Mammary epithelial cell (primary cell): ENCODE measurements at regions of chr11 and their contacts with region 1.

Region 1: DNA sequence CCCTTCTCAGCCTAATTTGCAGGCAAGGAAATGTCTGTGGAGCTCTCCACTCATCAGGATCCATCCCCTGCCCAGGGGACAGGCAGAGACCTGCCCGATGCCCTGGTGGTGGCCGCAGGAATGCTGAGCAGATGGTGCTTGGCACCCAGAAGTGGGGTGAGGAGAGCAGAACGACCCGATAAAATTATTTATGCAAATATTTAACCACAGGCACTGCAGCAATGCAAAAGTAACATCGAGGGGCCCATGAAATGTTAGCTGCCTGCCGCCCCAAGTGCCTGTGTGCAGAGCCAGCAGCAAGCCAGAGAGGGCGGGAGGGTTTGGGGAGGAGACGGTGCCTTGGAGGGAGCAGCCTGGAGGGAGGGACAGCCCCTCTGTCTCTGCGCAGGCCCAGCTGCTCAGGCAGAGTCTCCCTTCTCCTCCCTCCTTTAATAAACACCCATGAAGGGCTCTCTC is 205.5 kb downstream of the CTTN start:
- DNase-seq: peak; percentile 75
- H3K4me3 ChIP-seq: peak overlapping the region in 1 of 3 experiments; percentile 18
- H3K27ac ChIP-seq: no peak overlapping the region
- H3K4me1 ChIP-seq: peaks cover 27% of the 10 kb centered on the region
- H3K27me3 ChIP-seq: no peaks in the 10 kb centered on the region
- CTCF ChIP-seq: peak in 1 of 2 donors; percentile 13

Region 2: GRCh38 chr11:70544809-70545537 is 58.8 kb before region 1 on chr11:
- CTCF ChIA-PET with region 1: no interaction called
- dilution Hi-C with region 1: no loop called
- in situ Hi-C with region 1: no loop called
- intact Hi-C with region 1: no loop called
- DNase-seq: no peak
- H3K4me3 ChIP-seq: no peak overlapping the region
- H3K27ac ChIP-seq: no peak overlapping the region
- H3K4me1 ChIP-seq: no peaks in the 10 kb centered on the region
- H3K27me3 ChIP-seq: no peaks in the 10 kb centered on the region
- CTCF ChIP-seq: no peak

Region 3: DNA sequence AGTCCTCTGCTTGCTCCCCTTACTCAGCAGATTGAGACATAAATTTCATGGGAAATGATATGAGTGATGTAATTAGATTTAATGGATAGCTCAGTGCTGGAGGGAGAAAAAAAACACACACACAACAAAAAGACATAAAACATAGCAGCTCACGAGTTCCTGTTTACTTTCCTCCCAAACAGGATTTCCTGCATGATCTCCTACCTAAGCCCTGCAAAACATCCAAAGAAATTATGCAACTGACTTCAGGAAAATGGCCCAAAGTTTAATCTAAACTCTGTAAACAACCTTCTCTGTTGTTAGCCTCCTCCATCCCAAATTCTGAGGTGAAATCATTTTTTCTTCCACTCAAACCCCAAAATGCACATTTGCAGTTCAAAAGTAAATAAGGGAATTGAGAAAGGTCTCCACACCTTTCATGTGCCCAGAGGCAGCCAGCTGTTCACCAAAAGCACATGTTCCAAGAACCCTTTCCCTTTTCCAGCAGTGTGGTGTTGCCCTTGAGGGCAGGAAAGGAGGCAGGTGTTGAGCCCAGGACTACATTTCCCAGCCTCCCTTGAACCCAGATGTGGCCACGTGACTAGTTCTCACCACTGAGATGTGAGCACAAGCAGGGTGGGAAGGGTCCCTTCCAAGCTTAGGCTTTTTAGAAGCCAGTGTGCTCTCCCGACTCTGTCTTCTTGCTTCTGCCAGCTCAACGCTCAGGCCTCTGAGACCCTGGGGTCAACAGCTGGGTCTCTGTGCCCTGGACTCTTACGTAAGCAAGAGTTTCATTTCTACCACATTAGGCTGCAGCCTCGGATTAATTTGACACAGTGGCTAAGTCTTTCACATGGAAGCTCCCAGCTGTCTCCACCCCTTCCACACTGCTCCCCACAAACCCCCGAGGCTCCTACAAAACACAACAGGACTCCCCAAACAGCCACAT is 95.8 kb after region 1 on chr11:
- CTCF ChIA-PET with region 1: no interaction called
- dilution Hi-C with region 1: loop called (anchors 5 kb)
- in situ Hi-C with region 1: no loop called
- intact Hi-C with region 1: no loop called
- DNase-seq: no peak
- H3K4me3 ChIP-seq: no peak overlapping the region
- H3K27ac ChIP-seq: no peak overlapping the region
- H3K4me1 ChIP-seq: no peaks in the 10 kb centered on the region
- H3K27me3 ChIP-seq: no peaks in the 10 kb centered on the region
- CTCF ChIP-seq: no peak

Region 4: DNA sequence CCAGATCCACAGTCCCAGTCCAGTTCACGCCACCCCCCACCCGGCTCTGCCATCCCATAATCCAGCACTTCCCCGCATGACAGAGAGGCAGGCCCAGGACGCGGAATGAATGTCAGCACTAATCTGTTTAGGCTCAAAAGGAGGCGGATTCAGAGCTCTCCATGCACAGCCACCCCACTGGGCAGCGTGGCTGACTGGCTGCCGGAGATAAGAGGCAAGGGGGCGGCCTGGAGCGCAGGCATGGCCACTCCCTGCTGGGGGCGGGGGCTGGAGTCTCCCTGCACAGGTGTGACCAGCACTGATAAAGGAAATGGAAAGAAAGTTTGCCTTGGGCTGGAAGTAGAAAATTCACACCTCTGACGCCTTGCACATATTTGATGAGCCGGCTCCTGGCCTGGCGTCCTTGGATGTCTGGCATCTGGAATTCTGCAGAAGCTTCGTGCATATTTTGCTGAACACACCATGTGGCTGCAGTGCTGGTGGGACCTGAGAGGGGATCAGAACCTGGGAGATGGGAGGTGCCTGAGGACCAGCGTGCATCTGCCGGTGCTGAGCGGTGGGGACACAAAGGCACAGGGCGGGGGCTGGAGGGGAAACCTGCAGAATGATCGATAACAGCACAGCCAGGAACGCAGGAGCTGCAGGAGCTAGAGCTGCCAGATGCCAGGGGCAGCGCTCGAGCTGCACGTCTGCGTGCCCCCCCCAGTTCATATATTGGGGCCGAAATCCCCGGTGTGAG is 138.9 kb after region 1 on chr11:
- CTCF ChIA-PET with region 1: no interaction called
- dilution Hi-C with region 1: loop called (anchors 5 kb)
- in situ Hi-C with region 1: no loop called
- intact Hi-C with region 1: no loop called
- DNase-seq: no peak
- H3K4me3 ChIP-seq: no peak overlapping the region
- H3K27ac ChIP-seq: no peak overlapping the region
- H3K4me1 ChIP-seq: no peaks in the 10 kb centered on the region
- H3K27me3 ChIP-seq: no peaks in the 10 kb centered on the region
- CTCF ChIP-seq: no peak